Right ventricle myocardium superior (tissue), 1 donor: ENCODE measurements at regions of chr6 and their contacts with region 1.

Region 1: DNA sequence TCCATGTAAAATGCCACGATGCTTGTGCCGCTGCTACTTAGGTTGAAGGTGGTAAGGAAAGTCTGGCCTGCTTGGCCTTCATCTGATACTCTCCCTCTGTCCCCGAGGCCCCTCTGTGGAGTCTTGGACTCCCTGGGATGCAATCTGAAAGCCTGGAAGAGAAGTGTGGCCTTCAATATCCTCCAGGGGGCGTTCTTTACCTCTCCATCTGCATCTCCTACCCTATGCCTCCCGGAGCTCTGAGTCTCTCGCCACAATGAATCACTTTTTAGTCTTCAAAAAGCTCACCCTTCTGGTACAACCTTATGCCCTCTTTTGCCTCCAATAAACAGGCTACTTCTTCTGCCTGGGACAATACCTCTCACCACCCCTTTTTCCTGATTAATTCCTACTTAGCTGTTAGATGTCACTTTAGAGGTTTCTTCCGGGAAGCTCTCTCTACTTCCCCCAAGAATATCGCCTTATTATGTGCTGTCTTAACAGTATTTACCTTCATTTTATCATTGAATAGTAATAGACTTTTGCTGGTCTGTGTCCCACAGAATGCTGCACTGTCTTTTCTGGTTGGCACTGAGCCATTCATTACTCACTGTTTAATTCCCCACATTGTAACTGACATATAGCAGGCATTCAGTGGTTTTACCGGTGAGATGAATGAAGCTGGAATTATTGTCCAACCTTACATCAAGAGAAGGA is 13.9 kb upstream of the ATG5 start:
- DNase-seq: no peak
- ATAC-seq: peak; percentile 86

Region 2: GRCh38 chr6:106439446-106439845 is 100.0 kb after region 1 on chr6:
- intact Hi-C with region 1: no loop called
- DNase-seq: no peak
- ATAC-seq: no peak

Region 3: DNA sequence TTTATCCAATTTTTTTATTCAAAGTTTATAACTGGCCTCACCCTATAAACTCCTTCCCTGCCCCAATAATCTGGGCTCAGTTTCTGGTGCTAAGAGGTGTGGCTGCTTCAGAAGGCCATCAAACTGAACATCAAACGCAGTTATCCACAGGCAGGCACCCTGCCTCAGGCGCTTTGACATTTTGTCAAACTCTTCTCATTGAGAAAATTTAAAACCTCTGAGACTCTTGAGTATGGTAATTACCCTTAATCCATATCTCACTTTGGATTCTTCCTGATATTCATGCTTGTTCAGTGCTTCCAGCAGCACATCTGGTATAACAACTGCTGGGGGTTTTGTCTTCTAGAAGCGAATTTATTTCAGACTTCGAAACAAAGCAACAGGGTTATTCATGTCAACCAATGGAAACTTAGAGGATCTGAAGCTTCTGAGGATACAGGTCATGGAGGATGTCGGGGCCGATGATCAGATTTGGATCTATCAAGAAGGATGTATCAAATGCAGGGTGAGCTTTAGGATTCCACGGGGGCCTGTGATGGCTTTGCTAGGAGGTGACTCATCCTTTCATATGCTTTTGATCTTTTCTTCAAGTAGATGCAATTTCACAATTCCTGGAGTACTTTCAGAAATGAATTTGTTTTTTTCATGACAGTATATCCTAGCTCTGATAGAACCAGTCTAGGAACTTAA is 221.7 kb after region 1 on chr6:
- intact Hi-C with region 1: loop called (anchors 5 kb)
- DNase-seq: no peak
- ATAC-seq: no peak